GM18951 (cell line): ENCODE measurements at regions of chr6 and their contacts with region 1.

Region 1: DNA sequence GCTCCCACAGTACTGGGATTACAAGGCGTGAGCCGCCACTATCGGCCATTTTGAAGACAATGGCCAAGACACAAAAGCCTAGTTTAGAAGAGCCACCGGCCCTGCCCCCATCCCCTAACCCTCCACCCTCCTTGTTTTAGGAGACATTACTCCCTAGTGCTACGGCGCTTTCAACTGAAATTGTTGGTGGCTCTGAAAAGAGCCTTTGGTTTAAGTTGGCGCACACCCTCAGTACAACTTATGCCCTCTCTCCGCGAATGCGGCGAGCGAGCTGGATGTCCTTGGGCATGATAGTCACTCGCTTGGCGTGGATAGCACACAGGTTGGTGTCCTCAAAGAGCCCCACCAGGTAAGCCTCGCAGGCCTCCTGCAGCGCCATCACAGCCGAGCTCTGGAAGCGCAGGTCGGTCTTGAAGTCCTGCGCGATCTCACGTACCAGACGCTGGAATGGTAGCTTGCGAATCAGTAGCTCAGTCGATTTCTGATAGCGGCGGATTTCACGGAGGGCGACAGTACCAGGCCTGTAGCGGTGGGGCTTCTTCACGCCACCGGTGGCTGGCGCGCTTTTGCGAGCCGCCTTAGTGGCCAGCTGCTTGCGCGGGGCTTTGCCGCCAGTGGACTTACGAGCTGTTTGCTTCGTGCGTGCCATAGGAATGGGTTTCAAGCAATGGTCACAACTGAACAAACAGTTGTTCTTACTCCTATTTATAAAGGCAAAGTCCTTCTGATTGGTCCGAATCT is 114.9 kb upstream of the BTN3A2 start:
- POLR2A ChIP-seq: peak; percentile 99

Region 2: DNA sequence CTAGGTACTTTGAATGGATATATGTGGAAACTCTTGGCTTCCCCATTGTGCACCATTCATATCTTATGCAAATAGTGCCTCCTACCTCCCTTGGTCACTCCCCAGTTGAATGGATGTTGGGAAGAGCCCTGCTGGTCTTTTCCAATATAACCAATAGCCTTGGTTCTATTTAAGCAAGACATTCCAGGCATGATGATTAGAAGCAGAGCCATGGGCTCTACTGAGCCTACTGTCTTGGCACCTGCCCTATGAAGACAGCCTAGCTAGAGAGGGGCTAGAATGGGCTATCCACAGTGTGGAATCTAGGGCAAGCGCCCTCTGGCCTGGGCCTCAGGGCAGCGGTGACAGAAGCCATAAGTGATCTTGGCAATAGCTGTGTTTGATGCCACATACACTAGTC is 433.9 kb before region 1 on chr6:
- in situ Hi-C with region 1: no loop called
- POLR2A ChIP-seq: no peak

Region 3: GRCh38 chr6:26204332-26205165 is 45.6 kb before region 1 on chr6:
- in situ Hi-C with region 1: no loop called
- POLR2A ChIP-seq: peak; percentile 99

Region 4: DNA sequence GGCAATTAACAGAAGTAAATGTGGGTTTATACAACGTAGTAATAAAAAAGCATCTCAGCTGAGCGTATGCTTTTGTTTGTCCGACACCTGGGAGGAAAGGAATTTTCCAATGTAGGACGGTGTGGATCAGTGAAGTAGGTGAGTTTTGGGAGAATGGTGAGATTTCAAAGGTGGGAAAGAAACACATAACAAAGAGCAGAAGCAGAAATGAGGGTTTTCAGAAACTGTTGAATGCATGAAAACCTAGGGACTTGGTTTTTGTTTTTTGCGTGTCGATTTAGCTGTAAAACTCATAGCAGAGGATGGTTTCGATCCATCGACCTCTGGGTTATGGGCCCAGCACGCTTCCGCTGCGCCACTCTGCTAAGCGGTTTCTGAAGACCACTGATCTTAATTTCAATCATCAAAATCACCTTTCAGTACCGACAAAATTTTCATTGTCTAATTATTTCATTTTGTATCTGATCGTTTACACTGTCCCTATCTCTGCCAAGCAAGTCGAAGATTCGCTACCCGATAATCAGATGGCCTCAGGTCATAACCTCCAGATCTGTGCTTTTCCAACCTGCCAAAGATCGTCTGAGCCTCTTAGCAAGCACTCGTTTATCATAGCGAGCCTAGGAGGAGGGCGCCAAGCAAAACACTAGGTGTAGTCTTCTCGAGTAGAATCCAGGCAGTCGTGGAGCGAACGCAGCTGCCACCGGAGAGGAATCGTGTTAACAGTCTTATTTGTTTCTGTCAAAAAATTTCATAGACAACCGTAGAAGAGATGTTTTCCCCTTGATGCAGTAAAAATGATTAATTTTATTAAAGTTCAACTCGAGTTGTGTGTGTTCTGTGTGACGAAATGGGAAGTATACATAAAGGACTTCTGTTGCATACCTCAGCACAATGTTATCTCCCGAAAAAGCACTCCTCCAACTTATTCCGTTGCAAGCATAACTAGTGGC is 1082.8 kb after region 1 on chr6:
- in situ Hi-C with region 1: no loop called
- POLR2A ChIP-seq: no peak

Region 5: DNA sequence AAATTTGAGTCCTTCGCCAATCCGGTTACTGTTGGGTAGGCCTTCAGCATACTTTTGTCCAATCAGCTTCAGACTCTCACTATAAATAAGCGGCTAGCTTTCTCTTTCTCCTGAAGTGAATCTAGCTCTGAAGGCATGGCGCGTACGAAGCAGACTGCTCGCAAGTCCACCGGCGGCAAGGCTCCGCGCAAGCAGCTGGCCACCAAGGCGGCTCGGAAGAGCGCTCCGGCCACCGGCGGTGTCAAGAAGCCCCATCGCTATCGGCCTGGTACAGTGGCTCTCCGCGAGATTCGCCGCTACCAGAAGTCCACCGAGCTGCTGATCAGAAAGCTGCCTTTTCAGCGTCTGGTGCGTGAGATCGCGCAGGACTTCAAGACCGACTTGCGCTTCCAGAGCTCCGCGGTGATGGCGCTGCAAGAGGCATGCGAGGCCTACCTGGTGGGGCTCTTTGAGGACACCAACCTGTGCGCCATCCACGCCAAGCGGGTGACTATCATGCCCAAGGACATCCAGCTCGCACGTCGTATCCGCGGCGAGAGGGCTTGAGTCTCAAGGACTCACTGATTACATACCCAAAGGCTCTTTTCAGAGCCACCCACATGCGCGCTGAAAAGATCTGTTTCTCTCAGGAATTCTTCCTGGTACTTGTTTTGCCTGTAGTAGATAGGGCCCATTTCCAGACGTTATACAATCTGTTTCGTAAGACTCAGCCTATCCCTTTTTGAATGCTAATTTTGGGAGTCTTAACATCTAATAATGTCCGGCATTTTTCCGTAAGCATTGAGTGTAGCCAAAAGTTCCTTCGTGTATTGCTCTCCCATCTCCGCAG is 1560.0 kb after region 1 on chr6:
- in situ Hi-C with region 1: loop called (anchors 25 kb)
- POLR2A ChIP-seq: peak; percentile 100